ENCODE measurements at regions of chr17 and their contacts with region 1.

Region 1: DNA sequence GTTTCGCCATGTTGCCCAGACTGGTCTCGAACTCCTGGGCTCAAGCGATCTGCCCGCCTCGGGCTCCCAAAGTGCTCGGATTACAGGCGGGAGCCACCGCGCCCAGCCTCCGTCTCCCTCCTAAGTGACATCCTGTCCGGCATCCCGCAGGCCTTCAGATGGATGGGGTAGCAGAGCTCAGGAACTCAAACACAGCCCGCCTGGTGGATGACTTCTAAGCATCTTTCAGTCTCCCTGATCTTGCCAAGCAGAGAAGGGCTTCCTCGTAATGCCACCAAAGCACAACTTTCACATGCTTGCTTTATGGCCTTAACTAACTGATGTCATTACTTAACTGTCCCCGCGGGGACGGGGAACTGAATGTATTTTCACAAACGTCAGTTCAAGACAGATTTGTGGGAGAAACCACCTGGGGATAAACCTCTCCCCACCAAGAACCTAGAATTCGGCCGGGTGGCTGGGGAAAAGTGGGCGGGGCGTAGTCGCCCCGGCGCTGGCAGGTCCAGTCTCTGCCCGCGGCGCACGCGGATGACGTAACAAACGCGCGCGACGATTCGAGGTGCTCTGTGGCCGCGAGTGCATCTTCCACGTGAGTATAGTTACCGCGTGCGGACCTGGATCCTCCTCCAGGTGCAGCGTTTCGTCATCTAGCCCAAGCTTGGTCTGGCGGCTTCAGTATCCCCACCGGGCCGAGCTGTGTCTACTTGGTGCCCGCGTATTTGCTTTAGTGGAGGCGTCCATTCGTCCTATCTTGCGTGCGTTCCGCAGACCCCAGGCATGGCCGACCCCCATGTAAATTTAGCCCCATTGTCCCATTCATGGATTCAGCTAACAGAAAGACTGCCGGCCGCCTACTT is at the start of gene PFAS:
- DNase-seq: peak; percentile 88 to 99 (median 95)

Region 2: GRCh38 chr17:8288336-8289102 is 39.5 kb after region 1 on chr17 and contains the start of gene RANGRF:
- intact Hi-C with region 1: loop called (anchors 5 kb)
- DNase-seq: peak; percentile 90 to 97 (median 94)